B cell (primary cell): ENCODE measurements at regions of chr1 and their contacts with region 1.

Region 1: GRCh38 chr1:112715264-112716053 is at the start of gene PPM1J:
- DNase-seq: peak; percentile 97
- ATAC-seq: peak; percentile 86
- H3K4me3 ChIP-seq: peak within 1 kb of the TSS; percentile 62 to 82 (median 72)
- H3K4me3 Mint-ChIP-seq: peak within 1 kb of the TSS; percentile 93
- H3K27ac ChIP-seq: peak within 1 kb of the TSS; percentile 25 to 59
- H3K27ac Mint-ChIP-seq: peak within 1 kb of the TSS; percentile 85
- H3K4me1 ChIP-seq: peaks cover 26 to 47% of the 10 kb centered on the region in 2 donors
- H3K4me1 Mint-ChIP-seq: peaks cover 25% of the 10 kb centered on the region
- H3K27me3 ChIP-seq: peaks cover 0 to 16% (median 7%) of the 10 kb centered on the region in 4 experiments
- H3K27me3 Mint-ChIP-seq: peaks cover 15% of the 10 kb centered on the region
- CTCF ChIP-seq: no peak
- total RNA-seq, gene PPM1J: 1.7 and 2.1 TPM in 2 replicates

Region 2: DNA sequence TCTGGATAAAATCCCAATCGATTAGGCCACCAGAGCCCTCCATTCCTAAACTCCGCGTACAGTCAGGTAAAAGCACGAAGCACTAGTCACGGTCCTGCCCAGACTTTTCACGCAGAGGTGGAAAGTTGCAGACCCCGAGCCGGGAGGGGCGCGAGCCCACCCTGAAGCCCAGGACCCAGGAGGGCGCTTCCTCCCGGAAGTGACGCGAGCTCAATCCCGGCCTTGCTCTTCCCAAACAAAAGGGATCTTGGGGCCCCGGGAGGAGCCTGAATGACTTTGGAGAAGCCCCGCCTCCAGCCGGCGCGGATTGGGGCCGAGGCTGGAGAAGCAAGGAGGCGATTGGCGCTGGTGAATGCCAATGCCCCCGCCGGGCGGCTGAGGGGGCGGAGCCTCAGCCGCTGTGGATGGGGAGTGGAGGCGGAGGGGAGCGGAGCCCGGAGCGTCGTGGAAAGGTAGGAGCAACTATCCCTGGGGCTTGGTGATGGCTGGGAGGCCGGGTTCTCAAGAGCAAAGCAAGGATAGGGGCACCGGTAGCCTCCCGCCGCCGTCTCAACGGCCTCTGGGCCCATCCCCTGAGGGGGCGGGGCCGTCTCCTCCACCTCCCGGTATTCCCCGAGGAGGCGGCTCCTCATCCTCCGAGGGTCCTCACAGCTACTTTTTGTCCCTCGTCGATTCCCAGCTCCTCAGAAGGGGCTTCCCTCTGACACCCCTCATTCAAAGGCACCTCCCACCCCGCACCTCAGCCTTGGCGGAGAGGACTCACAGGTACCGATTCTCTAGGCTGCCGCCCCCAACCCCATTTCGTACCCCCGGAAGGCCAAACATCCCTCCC is 319.4 kb before region 1 on chr1 and contains the start of gene CTTNBP2NL:
- CTCF ChIA-PET with region 1: interaction called, 122 read pairs
- POLR2A ChIA-PET with region 1: interaction called, 3 read pairs
- intact Hi-C with region 1: no loop called
- DNase-seq: peak; percentile 86
- ATAC-seq: peak; percentile 96
- H3K4me3 ChIP-seq: peak within 1 kb of the TSS; percentile 24 to 98 (median 91)
- H3K4me3 Mint-ChIP-seq: peak within 1 kb of the TSS; percentile 98
- H3K27ac ChIP-seq: peak within 1 kb of the TSS in 1 of 2 donors; percentile 50
- H3K27ac Mint-ChIP-seq: peak within 1 kb of the TSS; percentile 75
- H3K4me1 ChIP-seq: peaks cover 21 to 33% of the 10 kb centered on the region in 2 donors
- H3K4me1 Mint-ChIP-seq: peaks cover 45% of the 10 kb centered on the region
- H3K27me3 ChIP-seq: peaks cover 0 to 5% (median 0%) of the 10 kb centered on the region in 4 experiments
- H3K27me3 Mint-ChIP-seq: no peaks in the 10 kb centered on the region
- CTCF ChIP-seq: no peak
- total RNA-seq, gene CTTNBP2NL: 28.3 and 28.9 TPM in 2 replicates

Region 3: GRCh38 chr1:112619520-112620376 is 95.7 kb before region 1 on chr1 and contains the start of gene CAPZA1:
- CTCF ChIA-PET with region 1: interaction called, 4 read pairs
- POLR2A ChIA-PET with region 1: interaction called, 4 read pairs
- intact Hi-C with region 1: loop called (anchors 2 kb)
- DNase-seq: peak; percentile 95
- ATAC-seq: peak; percentile 85
- H3K4me3 ChIP-seq: peak within 1 kb of the TSS; percentile 69 to 97 (median 91)
- H3K4me3 Mint-ChIP-seq: peak within 1 kb of the TSS; percentile 97
- H3K27ac ChIP-seq: peak within 1 kb of the TSS; percentile 94 to 99
- H3K27ac Mint-ChIP-seq: peak within 1 kb of the TSS; percentile 99
- H3K4me1 ChIP-seq: peaks cover 37 to 42% of the 10 kb centered on the region in 2 donors
- H3K4me1 Mint-ChIP-seq: peaks cover 46% of the 10 kb centered on the region
- H3K27me3 ChIP-seq: no peaks in the 10 kb centered on the region
- H3K27me3 Mint-ChIP-seq: no peaks in the 10 kb centered on the region
- CTCF ChIP-seq: no peak
- total RNA-seq, gene CAPZA1: 172 and 182 TPM in 2 replicates

Region 4: DNA sequence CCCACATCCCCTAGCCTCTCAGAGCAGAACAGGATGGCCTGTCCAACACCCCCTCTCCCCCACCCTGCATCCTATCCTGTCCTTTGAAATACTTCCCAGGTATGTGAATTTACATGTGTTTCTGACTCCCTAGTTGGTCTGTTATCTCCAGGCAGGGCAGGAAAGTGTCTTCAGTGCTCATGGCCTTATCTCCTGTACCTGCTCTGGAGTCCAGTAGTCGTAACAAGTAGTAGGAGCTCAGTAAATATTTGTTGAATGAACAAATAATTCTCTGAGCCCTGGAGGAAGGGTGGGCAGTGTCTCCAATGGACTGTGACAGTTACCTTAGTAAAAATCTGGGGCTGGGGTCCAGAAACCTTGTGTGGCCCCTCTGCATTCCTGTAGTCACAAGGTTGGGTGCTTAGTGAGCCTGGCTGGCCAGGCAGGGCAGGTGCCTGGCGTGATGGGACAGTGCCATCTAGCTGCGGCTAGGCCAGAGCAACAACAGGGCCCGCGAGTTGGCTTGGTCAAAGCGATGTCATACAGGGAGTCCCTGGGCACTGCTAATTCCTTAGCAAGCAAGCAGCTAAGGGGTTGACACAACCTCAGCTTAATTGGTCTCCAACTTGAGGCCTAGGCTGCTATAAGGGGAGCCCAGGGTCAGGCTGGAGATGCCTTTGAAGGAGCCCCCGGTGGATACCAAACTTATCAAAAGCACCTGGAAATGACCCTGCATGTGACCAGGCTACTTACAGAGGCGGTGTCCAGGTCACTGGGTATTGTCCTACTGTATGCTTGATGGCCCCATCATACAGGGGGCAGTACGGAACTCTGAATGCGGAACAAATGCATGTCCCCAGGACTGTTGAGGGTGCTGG is 88.7 kb after region 1 on chr1:
- CTCF ChIA-PET with region 1: interaction called, 104 read pairs
- POLR2A ChIA-PET with region 1: no interaction called
- intact Hi-C with region 1: no loop called
- DNase-seq: peak; percentile 58
- ATAC-seq: peak; percentile 79
- H3K4me3 ChIP-seq: no peak overlapping the region
- H3K4me3 Mint-ChIP-seq: no peak overlapping the region
- H3K27ac ChIP-seq: no peak overlapping the region
- H3K27ac Mint-ChIP-seq: no peak overlapping the region
- H3K4me1 ChIP-seq: no peaks in the 10 kb centered on the region
- H3K4me1 Mint-ChIP-seq: no peaks in the 10 kb centered on the region
- H3K27me3 ChIP-seq: no peaks in the 10 kb centered on the region
- H3K27me3 Mint-ChIP-seq: peaks cover 32% of the 10 kb centered on the region
- CTCF ChIP-seq: peak; percentile 53

Region 5: DNA sequence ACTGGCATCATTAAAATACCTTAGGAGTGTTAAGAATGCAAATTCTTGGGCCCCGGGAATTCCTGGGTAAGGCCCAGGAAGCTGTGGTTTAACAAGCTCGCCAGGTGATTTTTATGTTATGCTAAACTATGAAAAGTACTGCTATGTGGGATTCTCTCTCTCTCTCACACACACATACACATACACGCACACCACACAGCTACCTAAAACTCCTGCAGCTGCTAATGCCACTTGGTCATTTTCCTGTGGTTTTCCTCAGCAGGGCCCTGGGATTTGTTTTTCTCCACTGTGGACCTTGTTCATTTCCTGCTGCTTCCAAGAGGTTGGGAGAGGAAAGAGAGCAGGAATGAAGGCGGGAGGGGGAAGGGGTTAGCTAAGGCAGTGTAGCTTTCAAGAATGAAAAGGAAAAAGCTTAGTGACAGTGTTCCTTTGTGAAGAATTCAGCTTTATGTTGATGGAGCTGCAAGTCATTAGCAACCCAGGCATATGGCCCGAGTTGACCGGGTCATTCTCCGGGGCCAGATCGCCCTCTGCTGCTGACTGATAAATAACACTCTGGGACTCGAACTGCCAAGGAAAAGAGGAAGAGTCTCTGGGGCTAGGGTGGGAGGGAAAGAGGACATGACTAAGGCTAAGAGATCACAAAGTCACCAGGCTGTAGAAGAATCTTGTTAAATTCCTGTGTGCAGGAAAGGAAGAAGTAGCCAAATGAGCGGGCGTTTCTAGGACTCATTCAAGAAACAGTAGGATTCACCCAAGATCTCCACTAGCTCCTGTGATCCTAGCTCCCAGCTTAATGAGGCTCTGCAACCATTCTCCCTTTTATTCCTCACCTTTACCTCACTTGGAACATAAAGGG is 327.1 kb after region 1 on chr1:
- CTCF ChIA-PET with region 1: interaction called, 33 read pairs
- POLR2A ChIA-PET with region 1: no interaction called
- intact Hi-C with region 1: loop called (anchors 1 kb)
- DNase-seq: peak; percentile 65
- ATAC-seq: peak; percentile 73
- H3K4me3 ChIP-seq: no peak overlapping the region
- H3K4me3 Mint-ChIP-seq: no peak overlapping the region
- H3K27ac ChIP-seq: no peak overlapping the region
- H3K27ac Mint-ChIP-seq: no peak overlapping the region
- H3K4me1 ChIP-seq: peaks cover 5 to 12% of the 10 kb centered on the region in 2 donors
- H3K4me1 Mint-ChIP-seq: peaks cover 11% of the 10 kb centered on the region
- H3K27me3 ChIP-seq: peaks cover 0 to 3% (median 0%) of the 10 kb centered on the region in 4 experiments
- H3K27me3 Mint-ChIP-seq: peaks cover 3% of the 10 kb centered on the region
- CTCF ChIP-seq: peak; percentile 32

Region 6: GRCh38 chr1:113759333-113760101 is 1044.1 kb after region 1 on chr1 and contains the start of gene PHTF1:
- CTCF ChIA-PET with region 1: no interaction called
- POLR2A ChIA-PET with region 1: no interaction called
- intact Hi-C with region 1: loop called (anchors 5 kb)
- DNase-seq: peak; percentile 80
- ATAC-seq: peak; percentile 84
- H3K4me3 ChIP-seq: peak within 1 kb of the TSS; percentile 76 to 93 (median 92)
- H3K4me3 Mint-ChIP-seq: peak within 1 kb of the TSS; percentile 99
- H3K27ac ChIP-seq: peak within 1 kb of the TSS; percentile 86 to 90
- H3K27ac Mint-ChIP-seq: peak within 1 kb of the TSS; percentile 99
- H3K4me1 ChIP-seq: peaks cover 6 to 20% of the 10 kb centered on the region in 2 donors
- H3K4me1 Mint-ChIP-seq: peaks cover 23% of the 10 kb centered on the region
- H3K27me3 ChIP-seq: no peaks in the 10 kb centered on the region
- H3K27me3 Mint-ChIP-seq: no peaks in the 10 kb centered on the region
- CTCF ChIP-seq: no peak
- total RNA-seq, gene PHTF1: 18.5 and 25.7 TPM in 2 replicates

Region 7: GRCh38 chr1:114346480-114347029 is 1631.1 kb after region 1 on chr1:
- CTCF ChIA-PET with region 1: no interaction called
- POLR2A ChIA-PET with region 1: no interaction called
- intact Hi-C with region 1: loop called (anchors 10 kb)
- DNase-seq: peak; percentile 98
- ATAC-seq: peak; percentile 100
- H3K4me3 ChIP-seq: peak overlapping the region; percentile 24 to 61 (median 53)
- H3K4me3 Mint-ChIP-seq: peak overlapping the region; percentile 97
- H3K27ac ChIP-seq: no peak overlapping the region
- H3K27ac Mint-ChIP-seq: peak overlapping the region; percentile 62
- H3K4me1 ChIP-seq: peaks cover 0 to 13% of the 10 kb centered on the region in 2 donors
- H3K4me1 Mint-ChIP-seq: peaks cover 10% of the 10 kb centered on the region
- H3K27me3 ChIP-seq: peaks cover 0 to 3% (median under 1%) of the 10 kb centered on the region in 4 experiments
- H3K27me3 Mint-ChIP-seq: peaks cover 14% of the 10 kb centered on the region
- CTCF ChIP-seq: peak; percentile 100